ENCODE measurements at regions of chr9 and their contacts with region 1.

Region 1: GRCh38 chr9:35071814-35072460 is 488 bp downstream of the VCP start:
- DNase-seq: peak; percentile 84
- ATAC-seq: peak; percentile 75
- H3K4me3 ChIP-seq: peak overlapping the region; percentile 70
- H3K27ac ChIP-seq: peak overlapping the region; percentile 91
- H3K4me1 ChIP-seq: peaks cover 12% of the 10 kb centered on the region
- H3K27me3 ChIP-seq: no peaks in the 10 kb centered on the region
- CTCF ChIP-seq: peak; percentile 51
- POLR2A ChIP-seq: 0 out of 2 replicates have a peak, but pooled peaks have one; percentile 87
- RAD21 ChIP-seq: no peak

Region 2: DNA sequence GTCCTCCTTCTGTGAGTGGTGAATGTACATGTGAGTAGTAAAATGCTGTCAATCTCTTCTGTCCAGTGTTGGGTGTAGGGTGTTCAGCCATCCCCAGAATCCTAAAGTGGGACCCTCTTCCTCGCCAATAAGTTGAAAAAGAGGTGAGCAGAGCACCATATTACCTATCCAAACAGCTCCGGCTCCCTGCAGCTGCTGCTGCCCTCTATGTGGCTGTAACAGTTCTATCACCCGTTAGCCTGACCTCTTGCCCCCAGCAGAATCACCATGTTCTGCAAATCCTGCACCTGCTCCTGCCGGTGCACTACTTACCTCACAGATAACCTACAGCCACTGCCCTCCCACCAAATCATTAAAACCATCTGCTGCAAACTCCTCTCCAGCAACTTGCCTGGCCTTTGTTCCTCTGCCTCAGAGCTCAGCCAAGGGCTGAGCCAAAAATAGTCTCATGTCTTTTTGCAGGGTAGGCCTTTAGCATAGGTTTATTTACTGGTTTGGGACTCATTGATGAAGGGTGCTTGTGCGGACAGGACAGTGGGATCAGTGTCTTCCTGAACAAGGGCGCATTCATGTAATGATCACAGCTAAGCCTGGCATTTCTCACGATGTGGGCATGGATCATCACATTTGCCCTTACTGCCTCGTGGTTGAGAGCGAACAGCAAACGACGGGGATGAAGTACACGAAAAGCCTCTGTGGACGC is 312.4 kb before region 1 on chr9:
- CTCF ChIA-PET with region 1: no interaction called
- POLR2A ChIA-PET with region 1: no interaction called
- dilution Hi-C with region 1: no loop called
- in situ Hi-C with region 1: no loop called
- intact Hi-C with region 1: loop called (anchors 10 kb)
- DNase-seq: no peak
- ATAC-seq: no peak
- H3K4me3 ChIP-seq: no peak overlapping the region
- H3K27ac ChIP-seq: no peak overlapping the region
- H3K4me1 ChIP-seq: no peaks in the 10 kb centered on the region
- H3K27me3 ChIP-seq: peaks cover 18% of the 10 kb centered on the region
- CTCF ChIP-seq: no peak
- POLR2A ChIP-seq: no peak
- RAD21 ChIP-seq: no peak

Region 3: GRCh38 chr9:34989003-34989945 is 82.7 kb before region 1 on chr9 and contains the start of gene DNAJB5:
- CTCF ChIA-PET with region 1: interaction called, 3 read pairs
- POLR2A ChIA-PET with region 1: interaction called, 16 read pairs
- dilution Hi-C with region 1: no loop called
- in situ Hi-C with region 1: no loop called
- intact Hi-C with region 1: loop called (anchors 2 kb)
- DNase-seq: peak; percentile 100
- ATAC-seq: peak; percentile 87
- H3K4me3 ChIP-seq: peak within 1 kb of the TSS; percentile 60
- H3K27ac ChIP-seq: peak within 1 kb of the TSS; percentile 58
- H3K4me1 ChIP-seq: peaks cover 33% of the 10 kb centered on the region
- H3K27me3 ChIP-seq: no peaks in the 10 kb centered on the region
- CTCF ChIP-seq: no peak
- POLR2A ChIP-seq: peak; percentile 91; the same call in 1 of the 2 replicates
- RAD21 ChIP-seq: no peak
- total RNA-seq, gene DNAJB5: 11.7 and 14.9 TPM in 2 replicates

Region 4: DNA sequence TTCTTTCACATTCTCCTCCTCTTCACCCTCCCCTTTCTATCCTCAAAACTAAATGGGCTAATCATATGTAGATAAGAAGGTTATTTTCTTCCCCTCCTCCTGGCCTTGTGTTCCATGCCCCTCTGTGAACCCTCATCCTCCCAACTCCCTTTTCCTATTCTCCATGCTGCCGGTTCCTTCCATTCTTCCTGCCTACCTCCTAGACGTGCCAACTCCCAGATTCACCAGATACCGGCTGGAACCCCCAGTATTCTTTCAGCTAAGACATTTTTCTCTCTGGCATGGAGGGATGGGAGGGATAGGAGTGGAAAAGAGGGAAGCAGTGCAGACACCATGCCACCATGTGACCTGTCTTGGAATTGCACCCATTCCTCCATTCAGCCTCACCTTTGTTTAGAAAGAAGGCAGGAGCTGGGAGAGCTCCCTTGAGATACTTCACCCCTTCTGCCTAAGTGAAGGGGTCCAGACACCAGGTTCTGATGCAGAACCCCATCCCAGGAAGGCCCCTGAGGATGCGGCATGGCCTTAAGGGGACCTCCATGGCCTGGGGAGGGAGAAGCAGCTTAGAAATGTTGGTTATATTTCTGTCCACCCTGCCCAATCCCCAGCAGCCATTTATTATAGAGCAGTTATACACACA is 77.6 kb before region 1 on chr9:
- CTCF ChIA-PET with region 1: no interaction called
- POLR2A ChIA-PET with region 1: interaction called, 16 read pairs
- dilution Hi-C with region 1: no loop called
- in situ Hi-C with region 1: no loop called
- intact Hi-C with region 1: loop called (anchors 2 kb)
- DNase-seq: peak; percentile 49
- ATAC-seq: peak; percentile 21
- H3K4me3 ChIP-seq: no peak overlapping the region
- H3K27ac ChIP-seq: peak overlapping the region; percentile 84
- H3K4me1 ChIP-seq: peaks cover 44% of the 10 kb centered on the region
- H3K27me3 ChIP-seq: no peaks in the 10 kb centered on the region
- CTCF ChIP-seq: peak; percentile 67
- POLR2A ChIP-seq: no peak
- RAD21 ChIP-seq: peak; percentile 75

Region 5: GRCh38 chr9:35026671-35027070 is 45.3 kb before region 1 on chr9:
- CTCF ChIA-PET with region 1: no interaction called
- POLR2A ChIA-PET with region 1: interaction called, 17 read pairs
- dilution Hi-C with region 1: no loop called
- in situ Hi-C with region 1: no loop called
- intact Hi-C with region 1: no loop called
- DNase-seq: no peak
- ATAC-seq: peak; percentile 10; the same call in 1 of the 2 replicates
- H3K4me3 ChIP-seq: no peak overlapping the region
- H3K27ac ChIP-seq: no peak overlapping the region
- H3K4me1 ChIP-seq: peaks cover 7% of the 10 kb centered on the region
- H3K27me3 ChIP-seq: no peaks in the 10 kb centered on the region
- CTCF ChIP-seq: no peak
- POLR2A ChIP-seq: no peak
- RAD21 ChIP-seq: no peak

Region 6: DNA sequence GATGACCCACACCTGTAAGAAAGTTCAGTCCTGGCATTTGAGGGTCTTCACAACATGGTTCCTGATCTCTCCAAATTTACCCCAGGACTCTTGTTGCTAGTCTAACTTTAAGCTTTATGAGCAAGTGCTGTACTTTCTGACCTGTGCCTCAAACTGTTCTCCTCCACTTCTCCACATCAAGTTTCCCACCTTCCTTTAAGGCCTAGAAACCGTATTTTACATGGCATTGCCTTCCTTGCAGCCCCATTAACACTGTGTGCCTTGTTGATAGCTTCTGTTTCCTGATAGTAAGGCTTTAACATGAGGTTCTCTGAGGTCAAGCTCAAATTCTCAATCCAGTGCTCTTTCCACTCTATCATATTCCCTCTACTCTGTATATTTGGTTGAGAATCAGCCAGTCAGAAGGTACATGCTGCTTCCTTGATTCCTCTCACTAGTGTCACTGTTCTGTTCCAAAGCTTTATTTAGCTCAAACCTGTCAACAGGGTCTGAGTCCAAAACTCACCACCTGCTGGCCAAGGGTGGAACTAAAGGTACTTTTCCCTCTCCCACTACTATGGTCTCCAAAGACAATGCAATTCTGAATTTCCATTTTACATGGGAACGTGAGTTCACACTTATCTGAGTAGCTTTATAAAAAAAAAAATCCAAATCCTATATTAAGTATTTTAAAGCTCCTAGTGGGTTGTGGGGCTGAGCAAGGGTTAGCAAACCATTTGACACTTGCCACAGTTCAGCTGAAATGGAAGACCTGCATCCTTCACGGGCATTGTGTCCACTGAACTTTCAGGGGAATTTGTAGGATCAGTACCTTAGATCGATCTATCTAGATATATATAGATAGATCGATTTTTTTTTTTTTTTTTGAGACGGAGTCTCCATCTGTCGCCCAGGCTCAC is 20.6 kb before region 1 on chr9:
- CTCF ChIA-PET with region 1: interaction called, 3 read pairs
- POLR2A ChIA-PET with region 1: interaction called, 15 read pairs
- dilution Hi-C with region 1: no loop called
- in situ Hi-C with region 1: no loop called
- intact Hi-C with region 1: no loop called
- DNase-seq: peak; percentile 57
- ATAC-seq: peak; percentile 76
- H3K4me3 ChIP-seq: no peak overlapping the region
- H3K27ac ChIP-seq: no peak overlapping the region
- H3K4me1 ChIP-seq: no peaks in the 10 kb centered on the region
- H3K27me3 ChIP-seq: no peaks in the 10 kb centered on the region
- CTCF ChIP-seq: peak; percentile 56
- POLR2A ChIP-seq: no peak
- RAD21 ChIP-seq: peak; percentile 56

Measured in IMR-90 (cell line).